Endothelial cell of umbilical vein (primary cell): ENCODE measurements at regions of chr5 and their contacts with region 1.

Region 1: DNA sequence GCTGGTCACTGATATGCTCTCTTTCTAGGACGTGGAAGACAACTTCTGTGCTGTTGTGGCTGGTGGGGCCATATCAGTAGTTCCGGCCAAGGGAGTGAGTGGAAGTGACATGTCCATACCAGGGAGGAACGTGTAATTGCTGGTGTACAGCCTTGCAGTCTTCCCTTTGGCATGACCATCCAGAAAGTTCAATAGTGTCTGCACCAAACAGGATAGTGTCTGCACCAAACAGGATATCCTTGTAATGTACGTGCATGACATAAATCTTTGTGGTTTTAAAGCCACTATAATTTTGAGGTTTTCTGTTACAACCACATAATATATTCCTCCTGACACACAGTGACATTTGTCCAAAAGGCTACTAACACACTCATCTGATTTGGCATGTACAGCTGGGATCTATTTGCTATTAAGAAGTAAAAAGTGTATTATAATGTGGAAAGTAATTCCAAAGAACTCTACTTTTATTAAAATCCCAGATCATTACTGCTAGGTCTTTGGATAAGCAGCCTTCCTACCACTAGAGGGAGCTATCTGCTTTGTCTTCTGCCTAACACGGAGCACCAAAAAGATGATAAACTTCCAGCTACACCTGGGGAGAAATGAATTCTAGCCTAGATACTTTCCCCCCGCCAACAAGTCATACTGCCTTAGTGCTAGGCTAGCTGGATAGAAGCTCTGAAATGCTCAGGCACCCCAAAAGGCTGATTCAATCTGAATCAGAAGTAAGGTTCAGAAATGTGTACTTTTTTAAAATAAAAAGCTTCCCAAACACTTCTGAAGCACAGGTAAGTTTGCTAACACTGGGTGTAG is 52.7 kb downstream of the RNF145 start:
- DNase-seq: peak; percentile 70
- H3K4me3 ChIP-seq: no peak overlapping the region
- H3K27ac ChIP-seq: no peak overlapping the region
- H3K4me1 ChIP-seq: peaks cover 10% of the 10 kb centered on the region
- H3K27me3 ChIP-seq: no peaks in the 10 kb centered on the region
- CTCF ChIP-seq: peak; percentile 64 to 69
- POLR2A ChIP-seq: no peak

Region 2: GRCh38 chr5:159178978-159179377 is 22.3 kb after region 1 on chr5:
- CTCF ChIA-PET with region 1: interaction called, 18 read pairs
- POLR2A ChIA-PET with region 1: interaction called, 3 read pairs
- dilution Hi-C with region 1: no loop called
- intact Hi-C with region 1: no loop called
- DNase-seq: peak; percentile 97
- H3K4me3 ChIP-seq: peak overlapping the region in 1 of 3 experiments; percentile 29
- H3K27ac ChIP-seq: peak overlapping the region; percentile 90
- H3K4me1 ChIP-seq: peaks cover 30% of the 10 kb centered on the region
- H3K27me3 ChIP-seq: no peaks in the 10 kb centered on the region
- CTCF ChIP-seq: no peak
- POLR2A ChIP-seq: peak; percentile 34

Region 3: DNA sequence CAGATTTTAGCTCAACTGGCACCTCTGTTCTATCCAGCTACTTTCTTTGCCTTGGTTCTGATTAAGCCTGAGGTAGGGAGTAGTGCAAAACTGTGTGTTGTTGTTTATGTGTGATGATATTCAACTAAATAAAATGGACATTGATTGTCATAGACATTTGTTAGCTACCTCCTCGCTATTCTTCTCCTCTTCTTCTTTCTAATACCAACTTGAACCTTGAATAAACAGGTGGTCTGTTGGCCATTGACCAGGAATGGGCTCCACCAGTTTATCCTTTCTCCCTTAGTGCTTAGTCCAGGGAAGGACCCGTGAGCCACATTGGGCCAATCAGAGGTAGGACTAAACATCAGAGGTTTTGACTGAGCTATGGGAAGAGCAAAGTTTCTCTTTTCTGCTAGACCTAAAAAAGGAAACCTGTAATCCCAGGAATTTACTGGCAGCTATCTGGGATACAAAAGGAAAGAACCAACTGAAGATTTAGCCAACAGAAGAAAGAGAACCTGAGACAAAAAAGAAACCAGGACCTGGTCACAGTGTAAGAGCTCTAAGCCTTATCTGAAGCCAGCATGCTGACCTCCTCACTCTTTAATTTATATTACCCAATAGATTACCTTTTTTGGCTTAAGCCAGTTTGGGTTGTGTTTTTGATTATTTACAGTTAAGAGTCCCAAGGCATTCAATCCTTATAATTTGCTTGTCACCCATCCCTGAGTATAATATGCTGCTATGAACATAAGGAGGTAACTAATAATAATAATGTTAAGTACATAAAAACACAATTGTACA is 58.0 kb after region 1 on chr5:
- CTCF ChIA-PET with region 1: interaction called, 15 read pairs
- POLR2A ChIA-PET with region 1: no interaction called
- dilution Hi-C with region 1: no loop called
- intact Hi-C with region 1: no loop called
- DNase-seq: no peak
- H3K4me3 ChIP-seq: no peak overlapping the region
- H3K27ac ChIP-seq: no peak overlapping the region
- H3K4me1 ChIP-seq: peaks cover 2% of the 10 kb centered on the region
- H3K27me3 ChIP-seq: peaks cover 0 to 6% of the 10 kb centered on the region in 2 experiments
- CTCF ChIP-seq: no peak
- POLR2A ChIP-seq: no peak

Region 4: DNA sequence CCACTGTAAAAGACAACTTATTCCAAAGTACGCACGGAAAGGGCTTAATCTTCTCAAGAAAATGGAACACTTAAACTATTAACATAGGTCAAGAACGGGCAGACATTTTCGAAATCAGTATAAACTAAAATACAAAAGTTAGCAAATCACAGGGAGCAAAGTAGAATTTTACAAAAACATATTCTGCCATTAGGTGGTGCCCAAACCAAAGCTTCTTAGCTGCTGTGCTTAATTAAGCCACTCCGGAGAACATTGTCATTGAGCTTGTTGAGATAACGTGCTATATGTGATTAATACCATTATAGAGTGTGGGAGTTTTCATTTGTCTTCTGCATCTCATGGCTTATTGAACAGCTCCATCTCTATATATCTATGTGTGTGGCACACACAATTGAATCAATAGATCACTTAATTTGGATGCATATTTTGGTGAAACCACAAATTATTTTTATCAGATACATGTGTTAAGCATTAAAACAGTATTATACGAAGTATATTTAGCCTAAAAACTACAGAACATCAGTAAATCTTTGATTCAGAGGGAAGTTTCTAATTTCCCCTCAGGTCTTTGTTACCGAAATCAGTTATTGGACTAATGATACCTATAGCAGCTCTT is 129.9 kb after region 1 on chr5:
- CTCF ChIA-PET with region 1: interaction called, 29 read pairs
- POLR2A ChIA-PET with region 1: no interaction called
- dilution Hi-C with region 1: no loop called
- intact Hi-C with region 1: no loop called
- DNase-seq: peak; percentile 47
- H3K4me3 ChIP-seq: no peak overlapping the region
- H3K27ac ChIP-seq: no peak overlapping the region
- H3K4me1 ChIP-seq: no peaks in the 10 kb centered on the region
- H3K27me3 ChIP-seq: no peaks in the 10 kb centered on the region
- CTCF ChIP-seq: peak in 1 of 2 donors; percentile 31
- POLR2A ChIP-seq: no peak

Region 5: GRCh38 chr5:159331093-159331973 is 174.7 kb after region 1 on chr5:
- CTCF ChIA-PET with region 1: interaction called, 9 read pairs
- POLR2A ChIA-PET with region 1: no interaction called
- dilution Hi-C with region 1: no loop called
- intact Hi-C with region 1: loop called (anchors 1 kb)
- DNase-seq: peak; percentile 30
- H3K4me3 ChIP-seq: peak overlapping the region in 2 of 3 experiments; percentile 8 to 21
- H3K27ac ChIP-seq: no peak overlapping the region
- H3K4me1 ChIP-seq: peaks cover 3% of the 10 kb centered on the region
- H3K27me3 ChIP-seq: peaks cover 0 to 3% of the 10 kb centered on the region in 2 experiments
- CTCF ChIP-seq: peak; percentile 64 to 81
- POLR2A ChIP-seq: no peak

Region 6: GRCh38 chr5:159987031-159987674 is 830.5 kb after region 1 on chr5:
- CTCF ChIA-PET with region 1: interaction called, 27 read pairs
- POLR2A ChIA-PET with region 1: no interaction called
- dilution Hi-C with region 1: no loop called
- intact Hi-C with region 1: loop called (anchors 5 kb)
- DNase-seq: peak; percentile 58
- H3K4me3 ChIP-seq: peak overlapping the region in 2 of 3 experiments; percentile 10 to 15
- H3K27ac ChIP-seq: no peak overlapping the region
- H3K4me1 ChIP-seq: peaks cover 2% of the 10 kb centered on the region
- H3K27me3 ChIP-seq: peaks cover 36 to 37% of the 10 kb centered on the region in 2 experiments
- CTCF ChIP-seq: peak; percentile 62 to 87
- POLR2A ChIP-seq: no peak